PC-9 (cell line): ENCODE measurements at regions of chr5 and their contacts with region 1.

Region 1: GRCh38 chr5:73558950-73559349 is 6.5 kb downstream of the ANKRA2 start:
- DNase-seq: no peak
- H3K4me3 ChIP-seq: no peak overlapping the region
- H3K27ac ChIP-seq: no peak overlapping the region
- H3K4me1 ChIP-seq: peaks cover 3% of the 10 kb centered on the region
- H3K27me3 ChIP-seq: no peaks in the 10 kb centered on the region
- CTCF ChIP-seq: 0 out of 2 replicates have a peak, but pooled peaks have one; percentile 24

Region 2: DNA sequence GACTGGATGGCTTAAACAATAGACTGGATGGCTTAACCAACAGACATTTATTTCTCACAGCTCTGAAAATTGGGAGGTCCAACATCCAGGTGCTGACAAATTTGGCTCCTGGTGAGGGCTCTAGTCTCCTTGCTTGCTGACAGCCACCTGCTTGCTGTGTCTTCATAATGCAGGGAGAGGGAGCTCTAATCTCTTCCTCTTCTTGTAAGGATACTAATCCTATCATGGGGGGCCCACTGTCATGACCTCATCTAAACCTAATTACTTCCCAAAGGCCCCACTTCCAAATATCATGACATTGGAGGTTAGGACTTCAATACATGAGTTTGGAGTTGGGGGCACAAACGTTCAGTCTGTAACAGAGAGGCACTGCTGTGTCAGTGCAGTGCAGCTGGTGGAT is 136.8 kb before region 1 on chr5:
- CTCF ChIA-PET with region 1: no interaction called
- POLR2A ChIA-PET with region 1: no interaction called
- intact Hi-C with region 1: no loop called
- DNase-seq: no peak
- H3K4me3 ChIP-seq: no peak overlapping the region
- H3K27ac ChIP-seq: no peak overlapping the region
- H3K4me1 ChIP-seq: no peaks in the 10 kb centered on the region
- H3K27me3 ChIP-seq: no peaks in the 10 kb centered on the region
- CTCF ChIP-seq: no peak; the same call in 1 of the 2 replicates

Region 3: DNA sequence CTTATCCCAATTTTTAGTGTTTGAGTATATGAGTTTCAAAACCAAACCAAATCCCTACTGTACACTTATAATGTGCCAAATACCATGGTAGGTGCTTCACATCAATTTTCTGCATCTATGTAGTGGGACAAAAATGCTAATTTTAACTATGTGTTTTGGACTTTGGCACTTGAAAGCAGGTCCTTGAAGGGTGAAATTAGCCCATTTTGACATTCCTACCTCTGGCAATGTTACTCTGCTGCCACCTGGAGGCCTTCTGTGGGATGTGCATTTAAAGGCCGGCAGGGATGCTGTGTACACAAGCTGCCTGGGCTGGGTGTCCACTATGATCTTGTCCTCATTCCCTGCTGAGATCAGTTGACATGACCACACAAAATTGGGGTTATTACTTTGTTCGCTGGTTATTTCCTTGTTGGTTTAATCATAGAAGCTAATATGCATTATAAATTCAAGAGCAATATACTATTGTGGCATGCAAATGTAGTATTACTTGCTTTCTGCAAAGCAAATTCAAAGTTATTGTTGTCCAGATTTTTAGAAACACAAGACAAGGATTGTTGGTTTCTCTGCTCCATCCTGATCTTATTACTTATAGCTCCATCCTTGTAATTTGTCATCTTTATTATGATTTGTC is 233.9 kb after region 1 on chr5:
- CTCF ChIA-PET with region 1: no interaction called
- POLR2A ChIA-PET with region 1: no interaction called
- intact Hi-C with region 1: loop called (anchors 1 kb)
- DNase-seq: peak; percentile 58 to 72
- H3K4me3 ChIP-seq: no peak overlapping the region
- H3K27ac ChIP-seq: no peak overlapping the region
- H3K4me1 ChIP-seq: peaks cover 12% of the 10 kb centered on the region
- H3K27me3 ChIP-seq: no peaks in the 10 kb centered on the region
- CTCF ChIP-seq: peak; percentile 98

Region 4: DNA sequence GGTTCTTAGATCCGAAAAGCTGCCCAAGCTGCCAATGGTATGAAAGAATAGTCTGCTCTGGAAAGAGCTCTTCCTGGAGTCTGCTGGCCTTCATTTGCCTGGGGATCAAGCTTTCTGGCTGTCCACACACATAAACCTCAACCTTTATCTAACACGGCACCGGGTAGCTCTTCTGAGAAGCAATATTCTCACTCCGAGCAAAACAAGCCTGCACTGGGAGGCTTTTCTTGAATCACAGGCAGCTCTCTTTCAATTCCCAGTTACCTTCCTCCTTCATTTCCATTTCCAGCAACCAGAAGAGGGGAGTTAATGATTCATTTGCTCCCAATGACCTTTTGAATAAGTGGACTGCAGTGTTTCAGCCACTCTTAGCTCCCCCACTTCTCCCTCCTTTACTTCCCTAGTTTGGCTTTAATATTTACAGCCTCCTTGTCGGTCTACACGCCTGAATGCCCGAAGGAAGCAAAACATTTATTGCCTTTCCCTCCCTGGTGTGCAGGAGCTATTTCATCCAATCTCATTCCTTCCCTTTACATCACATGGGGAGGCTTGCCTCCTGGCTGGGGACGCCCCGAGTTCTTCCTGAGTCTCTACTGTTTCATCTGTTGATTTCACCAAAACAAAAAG is 254.1 kb after region 1 on chr5:
- CTCF ChIA-PET with region 1: no interaction called
- POLR2A ChIA-PET with region 1: no interaction called
- intact Hi-C with region 1: no loop called
- DNase-seq: no peak
- H3K4me3 ChIP-seq: no peak overlapping the region
- H3K27ac ChIP-seq: no peak overlapping the region
- H3K4me1 ChIP-seq: peaks cover 13% of the 10 kb centered on the region
- H3K27me3 ChIP-seq: no peaks in the 10 kb centered on the region
- CTCF ChIP-seq: no peak